Right cardiac atrium (tissue), 5 donors: ENCODE measurements at regions of chr3 and their contacts with region 1.

Region 1: DNA sequence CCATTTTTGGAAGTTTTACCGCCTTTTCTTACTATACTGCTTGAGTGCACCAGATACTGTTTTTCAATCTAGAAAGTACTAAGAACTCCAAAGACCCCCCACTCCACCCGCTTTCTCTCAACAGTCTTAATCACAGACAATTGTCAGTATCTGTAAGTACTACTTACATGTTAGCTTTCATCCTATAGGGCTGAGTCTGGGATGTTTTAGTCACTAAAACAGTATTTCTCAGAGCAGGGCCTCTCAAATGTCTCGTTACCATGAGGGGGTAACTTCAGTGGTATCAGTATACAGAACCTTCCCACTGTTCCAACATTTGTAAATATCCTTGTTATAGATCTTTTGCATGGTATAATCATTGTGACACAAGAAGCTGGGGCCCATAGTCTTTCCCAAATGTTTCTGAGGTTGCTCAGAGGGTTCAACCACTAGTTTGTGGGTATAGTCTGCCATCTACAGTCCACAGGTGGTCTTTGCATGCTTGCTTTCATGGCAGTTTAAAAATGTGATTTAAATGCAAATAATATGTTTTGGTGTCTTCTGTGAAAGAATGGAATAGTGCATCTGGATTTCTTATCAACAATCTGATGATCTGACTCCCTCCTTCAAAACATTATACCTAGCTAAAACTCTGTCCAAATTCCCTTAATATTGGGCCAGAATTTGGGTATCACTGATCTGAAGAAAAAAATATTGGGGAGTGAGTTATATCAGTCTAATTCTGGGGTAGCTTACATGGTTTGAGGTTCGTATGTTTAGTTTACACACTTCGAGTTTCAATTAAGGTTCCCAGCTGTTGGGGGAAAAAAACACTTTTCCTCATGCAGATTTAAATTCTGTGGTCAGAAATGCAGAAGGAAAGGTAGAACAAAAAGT is 18.0 kb upstream of the DNAJC13 start:
- DNase-seq: no peak
- ATAC-seq: peak; percentile 55 to 75
- H3K4me3 ChIP-seq: no peak overlapping the region
- H3K27ac ChIP-seq: no peak overlapping the region
- H3K4me1 ChIP-seq: no peaks in the 10 kb centered on the region
- H3K27me3 ChIP-seq: no peaks in the 10 kb centered on the region

Region 2: GRCh38 chr3:131973731-131974130 is 425.6 kb before region 1 on chr3:
- intact Hi-C with region 1: no loop called
- DNase-seq: no peak
- ATAC-seq: no peak
- H3K4me3 ChIP-seq: no peak overlapping the region
- H3K27ac ChIP-seq: no peak overlapping the region
- H3K4me1 ChIP-seq: no peaks in the 10 kb centered on the region
- H3K27me3 ChIP-seq: no peaks in the 10 kb centered on the region

Region 3: GRCh38 chr3:132352541-132353143 is 46.6 kb before region 1 on chr3:
- intact Hi-C with region 1: loop called in 3 of 4 experiments (anchors 2 to 5 kb)
- DNase-seq: peak in 2 of 3 donors; percentile 33 to 69
- ATAC-seq: peak; percentile 74 to 85
- H3K4me3 ChIP-seq: no peak overlapping the region
- H3K27ac ChIP-seq: no peak overlapping the region
- H3K4me1 ChIP-seq: peaks cover 1% of the 10 kb centered on the region
- H3K27me3 ChIP-seq: no peaks in the 10 kb centered on the region